T-cell (primary cell): ENCODE measurements at regions of chr1 and their contacts with region 1.

Region 1: DNA sequence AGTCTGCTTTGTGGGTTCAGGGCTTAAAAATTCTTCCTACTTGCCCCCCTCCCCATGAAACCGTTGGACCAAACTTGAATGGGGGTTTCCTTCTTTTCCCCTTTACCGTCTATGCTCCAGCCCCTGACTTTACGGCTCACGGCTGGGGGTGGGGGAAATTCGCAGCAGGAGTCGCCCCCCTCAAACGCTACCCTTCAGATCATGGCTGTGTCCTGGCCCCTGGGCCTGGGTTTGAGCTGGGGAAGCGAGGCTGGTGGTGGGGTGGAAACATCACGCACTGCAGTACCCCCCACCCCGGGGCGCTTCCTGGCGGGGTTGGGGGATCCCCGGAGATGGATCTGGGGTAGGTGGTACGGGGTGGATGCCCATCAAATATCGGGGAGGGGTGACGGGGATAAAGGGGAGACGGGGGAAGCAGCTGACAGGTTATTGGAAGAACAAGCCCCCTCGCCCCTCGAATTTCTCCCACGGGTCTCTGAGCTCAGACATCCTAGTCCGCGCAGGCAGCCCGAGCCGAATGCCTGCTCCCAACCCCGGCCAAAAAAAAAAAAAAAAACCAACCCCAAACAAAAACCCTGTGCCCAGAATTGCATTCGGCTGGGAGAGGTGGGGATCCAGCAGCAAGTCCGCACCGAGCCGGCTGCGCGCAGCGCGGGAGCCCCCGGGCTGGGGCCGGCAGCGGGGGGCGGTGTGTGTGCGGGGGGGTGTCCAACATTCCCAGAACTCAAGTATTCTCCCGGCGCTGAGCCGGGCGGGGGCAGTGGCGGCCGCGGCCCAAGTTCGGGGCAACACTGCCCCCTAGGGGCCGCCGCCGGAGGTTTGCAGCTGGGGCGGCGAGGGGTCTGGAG is 59.0 kb upstream of the ACOT11 start:
- DNase-seq: peak in 33 of 35 experiments; percentile 13 to 80 (median 54)
- ATAC-seq: peak; percentile 69 to 77 (median 72)
- H3K4me3 ChIP-seq: peak overlapping the region; percentile 74
- H3K4me3 Mint-ChIP-seq: peak overlapping the region; percentile 79 to 88 (median 85)
- H3K27ac ChIP-seq: peak overlapping the region; percentile 61
- H3K27ac Mint-ChIP-seq: peak overlapping the region; percentile 75 to 79
- H3K4me1 ChIP-seq: peaks cover 25 to 57% of the 10 kb centered on the region in 2 experiments
- H3K4me1 Mint-ChIP-seq: peaks cover 29 to 47% (median 39%) of the 10 kb centered on the region in 3 donors
- H3K27me3 ChIP-seq: peaks cover 0 to 16% of the 10 kb centered on the region in 2 experiments
- H3K27me3 Mint-ChIP-seq: peaks cover 0 to 3% of the 10 kb centered on the region in 2 donors

Region 2: DNA sequence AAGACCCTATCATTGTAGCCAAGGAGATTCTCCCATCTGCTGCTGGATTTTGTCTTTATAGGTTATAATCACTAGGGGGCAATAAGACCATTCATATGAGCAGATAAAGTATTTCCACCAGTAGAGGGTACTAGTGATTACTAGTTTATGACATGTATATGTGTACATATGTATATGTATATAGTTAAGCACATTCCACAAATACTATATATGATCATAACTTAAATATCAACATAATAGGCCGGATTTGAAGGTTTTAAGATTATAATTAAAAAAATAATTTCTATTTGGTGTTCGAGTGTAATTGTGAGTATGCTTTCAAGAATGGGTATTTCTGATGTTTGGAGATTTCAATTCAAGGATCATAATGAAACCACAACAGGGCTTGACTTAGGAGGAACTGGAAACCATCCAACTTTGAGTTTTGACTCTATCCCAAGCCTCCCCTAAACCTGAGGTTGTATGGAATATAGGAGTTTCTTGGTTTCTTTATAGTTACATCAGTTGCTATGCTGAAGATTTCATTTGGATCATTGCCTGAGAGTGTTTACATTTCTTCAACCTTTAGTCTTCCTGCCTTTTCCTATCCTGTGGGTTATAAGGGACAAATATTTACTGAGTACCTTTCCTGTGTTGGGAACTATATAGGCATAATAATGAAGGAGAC is 418.7 kb before region 1 on chr1:
- CTCF ChIA-PET with region 1: interaction called, 8 to 10 read pairs
- POLR2A ChIA-PET with region 1: interaction called in 1 of 2 experiments, 3 read pairs
- DNase-seq: peak in 1 of 35 experiments; percentile 72
- ATAC-seq: peak; percentile 83 to 91 (median 87)
- H3K4me3 ChIP-seq: no peak overlapping the region
- H3K4me3 Mint-ChIP-seq: no peak overlapping the region
- H3K27ac ChIP-seq: no peak overlapping the region
- H3K27ac Mint-ChIP-seq: no peak overlapping the region
- H3K4me1 ChIP-seq: no peaks in the 10 kb centered on the region
- H3K4me1 Mint-ChIP-seq: peaks cover 0 to 4% (median 2%) of the 10 kb centered on the region in 3 donors
- H3K27me3 ChIP-seq: no peaks in the 10 kb centered on the region
- H3K27me3 Mint-ChIP-seq: no peaks in the 10 kb centered on the region

Region 3: GRCh38 chr1:54294887-54295286 is 194.1 kb before region 1 on chr1:
- CTCF ChIA-PET with region 1: no interaction called
- POLR2A ChIA-PET with region 1: interaction called, 3 to 11 read pairs
- DNase-seq: no peak
- ATAC-seq: no peak
- H3K4me3 ChIP-seq: no peak overlapping the region
- H3K4me3 Mint-ChIP-seq: no peak overlapping the region
- H3K27ac ChIP-seq: no peak overlapping the region
- H3K27ac Mint-ChIP-seq: peak overlapping the region; percentile 23 to 69
- H3K4me1 ChIP-seq: peaks cover 25 to 84% of the 10 kb centered on the region in 2 experiments
- H3K4me1 Mint-ChIP-seq: peaks cover 91 to 95% (median 92%) of the 10 kb centered on the region in 3 donors
- H3K27me3 ChIP-seq: no peaks in the 10 kb centered on the region
- H3K27me3 Mint-ChIP-seq: no peaks in the 10 kb centered on the region

Region 4: DNA sequence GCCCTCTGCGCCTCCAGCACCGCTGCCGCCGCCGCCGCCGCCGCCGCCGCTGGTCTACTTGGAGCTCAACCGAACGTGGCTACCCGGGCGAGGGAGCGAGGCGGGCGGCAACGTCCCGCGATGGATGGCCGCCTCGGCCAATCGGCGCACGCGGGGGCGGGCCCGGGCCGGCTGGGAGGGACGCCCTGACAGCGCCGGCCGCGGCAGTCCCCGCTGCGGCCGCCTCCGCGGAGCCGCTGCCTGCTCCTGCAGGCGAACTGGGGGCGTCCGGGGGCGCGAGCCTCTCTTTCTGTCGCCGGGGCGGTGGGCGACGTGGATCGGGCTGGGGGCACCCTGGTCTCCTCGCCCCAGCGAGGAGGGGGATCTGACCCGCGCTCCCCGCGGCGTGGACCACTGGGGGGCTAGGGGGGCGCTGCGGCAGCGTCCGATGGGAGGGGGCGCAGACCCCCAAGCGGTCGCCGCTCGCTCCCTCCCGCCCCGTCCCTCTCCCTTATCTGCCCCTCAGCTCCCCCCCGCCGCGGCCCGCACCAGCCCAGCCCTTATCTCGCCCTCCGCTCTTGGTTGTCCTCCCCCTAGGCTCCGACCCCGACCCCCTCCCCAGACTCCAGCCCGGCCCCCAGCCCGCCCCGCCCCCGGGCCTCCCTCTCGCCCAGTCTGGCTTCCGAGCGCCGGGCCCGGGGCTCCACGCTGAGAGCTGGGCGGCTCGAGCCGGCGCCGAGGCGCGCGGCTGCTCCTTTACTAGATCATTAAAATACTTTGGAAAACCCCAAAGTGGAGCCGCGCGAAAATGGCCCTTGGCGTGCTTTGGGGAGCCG is 82.5 kb before region 1 on chr1 and contains the start of gene SSBP3:
- CTCF ChIA-PET with region 1: interaction called, 4 to 35 read pairs
- POLR2A ChIA-PET with region 1: interaction called, 3 to 7 read pairs
- DNase-seq: peak; percentile 84 to 96 (median 90)
- ATAC-seq: peak; percentile 93 to 96 (median 95)
- H3K4me3 ChIP-seq: peak within 1 kb of the TSS; percentile 76 to 87
- H3K4me3 Mint-ChIP-seq: peak within 1 kb of the TSS; percentile 90 to 92 (median 91)
- H3K27ac ChIP-seq: peak within 1 kb of the TSS; percentile 70
- H3K27ac Mint-ChIP-seq: peak within 1 kb of the TSS; percentile 86 to 97
- H3K4me1 ChIP-seq: peaks cover 29 to 70% of the 10 kb centered on the region in 2 experiments
- H3K4me1 Mint-ChIP-seq: peaks cover 59 to 72% (median 70%) of the 10 kb centered on the region in 3 donors
- H3K27me3 ChIP-seq: no peaks in the 10 kb centered on the region
- H3K27me3 Mint-ChIP-seq: no peaks in the 10 kb centered on the region
- total RNA-seq, gene SSBP3: 51.5 to 84.5 (median 69.2) TPM

Region 5: DNA sequence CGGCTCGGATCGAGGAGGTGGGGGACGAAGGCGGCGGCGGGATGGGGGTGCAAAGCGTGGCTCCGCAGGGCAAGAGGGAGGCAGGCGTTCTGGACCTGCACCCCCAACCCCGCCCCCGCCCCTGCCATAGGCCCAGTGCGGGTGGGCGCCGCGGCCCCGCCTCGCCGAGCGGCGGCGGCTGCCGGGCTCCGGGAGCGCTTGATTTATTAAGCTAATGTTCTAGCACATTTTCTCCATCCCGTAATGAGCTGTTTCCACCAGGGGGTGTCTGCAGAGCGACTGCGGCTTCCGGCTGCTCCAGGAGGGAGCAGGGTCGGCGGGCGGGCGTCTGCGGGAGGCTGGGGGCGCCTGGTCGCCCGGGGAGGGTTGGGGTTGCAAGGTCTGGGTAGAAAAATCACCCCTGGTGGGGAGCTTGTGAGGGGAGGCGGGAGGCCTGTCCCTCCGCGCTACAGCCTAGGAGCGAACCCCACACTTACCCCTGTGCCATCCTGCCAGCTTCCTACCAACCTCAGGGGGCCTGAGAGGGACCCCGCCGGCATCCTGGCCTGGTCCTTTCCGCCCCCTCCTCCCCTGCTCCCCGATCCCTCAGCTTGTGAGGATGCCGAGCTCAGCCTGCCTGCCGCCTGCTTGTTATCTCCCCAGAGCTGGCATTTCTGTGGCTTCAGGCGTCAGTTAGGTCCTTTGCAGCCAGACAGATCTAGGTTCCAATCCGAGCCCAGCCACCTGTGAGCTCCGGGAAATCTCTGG is 10.5 kb after region 1 on chr1:
- CTCF ChIA-PET with region 1: interaction called, 5 to 11 read pairs
- POLR2A ChIA-PET with region 1: no interaction called
- DNase-seq: peak in 20 of 35 experiments; percentile 17 to 61 (median 32)
- ATAC-seq: peak; percentile 78 to 91 (median 86)
- H3K4me3 ChIP-seq: peak overlapping the region; percentile 18 to 66
- H3K4me3 Mint-ChIP-seq: peak overlapping the region; percentile 67 to 72 (median 70)
- H3K27ac ChIP-seq: no peak overlapping the region
- H3K27ac Mint-ChIP-seq: no peak overlapping the region
- H3K4me1 ChIP-seq: peaks cover 0 to 14% of the 10 kb centered on the region in 2 experiments
- H3K4me1 Mint-ChIP-seq: peaks cover 8 to 10% (median 9%) of the 10 kb centered on the region in 3 donors
- H3K27me3 ChIP-seq: peaks cover 0 to 61% of the 10 kb centered on the region in 2 experiments
- H3K27me3 Mint-ChIP-seq: peaks cover 30 to 53% of the 10 kb centered on the region in 2 donors

Region 6: DNA sequence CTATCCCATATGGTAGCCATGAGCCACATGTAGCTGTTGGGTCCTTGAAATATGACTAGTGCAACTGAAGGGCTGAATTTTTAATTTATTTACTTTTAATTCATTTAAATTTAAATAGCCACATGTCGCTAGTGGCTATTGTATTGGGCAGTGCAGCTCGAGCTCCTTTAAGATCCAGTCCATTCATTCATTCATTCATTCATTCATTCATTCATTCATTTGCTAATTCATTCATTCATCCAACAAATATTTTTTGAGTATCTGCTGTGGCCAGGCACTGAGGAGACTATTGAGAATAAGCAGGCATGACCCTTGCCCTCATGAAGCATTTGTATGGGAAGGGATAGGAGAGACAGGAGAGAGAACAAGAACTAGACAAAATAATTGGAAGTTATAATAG is 29.5 kb after region 1 on chr1:
- CTCF ChIA-PET with region 1: no interaction called
- POLR2A ChIA-PET with region 1: no interaction called
- DNase-seq: no peak
- ATAC-seq: no peak
- H3K4me3 ChIP-seq: no peak overlapping the region
- H3K4me3 Mint-ChIP-seq: no peak overlapping the region
- H3K27ac ChIP-seq: no peak overlapping the region
- H3K27ac Mint-ChIP-seq: no peak overlapping the region
- H3K4me1 ChIP-seq: no peaks in the 10 kb centered on the region
- H3K4me1 Mint-ChIP-seq: no peaks in the 10 kb centered on the region
- H3K27me3 ChIP-seq: peaks cover 0 to 2% of the 10 kb centered on the region in 2 experiments
- H3K27me3 Mint-ChIP-seq: peaks cover 0 to 1% of the 10 kb centered on the region in 2 donors